ENCODE measurements at regions of chr17 and their contacts with region 1.

Region 1: GRCh38 chr17:45277216-45277849 is 15.4 kb upstream of the SPATA32 start:
- DNase-seq: peak; percentile 78 to 93 (median 91)
- ATAC-seq: peak; percentile 99
- H3K4me3 ChIP-seq: no peak overlapping the region
- H3K4me3 Mint-ChIP-seq: no peak overlapping the region
- H3K27ac ChIP-seq: no peak overlapping the region
- H3K27ac Mint-ChIP-seq: peak overlapping the region; percentile 41
- H3K4me1 ChIP-seq: no peaks in the 10 kb centered on the region
- H3K4me1 Mint-ChIP-seq: peaks cover 7% of the 10 kb centered on the region
- H3K27me3 ChIP-seq: no peaks in the 10 kb centered on the region
- H3K27me3 Mint-ChIP-seq: no peaks in the 10 kb centered on the region
- CTCF ChIP-seq: peak; percentile 73

Region 2: GRCh38 chr17:45218895-45219661 is 58.3 kb before region 1 on chr17:
- CTCF ChIA-PET with region 1: interaction called, 206 read pairs
- POLR2A ChIA-PET with region 1: interaction called, 11 read pairs
- intact Hi-C with region 1: no loop called
- DNase-seq: peak; percentile 79 to 95 (median 89)
- ATAC-seq: peak; percentile 45
- H3K4me3 ChIP-seq: peak overlapping the region in 1 of 2 experiments; percentile 1
- H3K4me3 Mint-ChIP-seq: peak overlapping the region; percentile 91
- H3K27ac ChIP-seq: no peak overlapping the region
- H3K27ac Mint-ChIP-seq: peak overlapping the region; percentile 90
- H3K4me1 ChIP-seq: peaks cover 25% of the 10 kb centered on the region
- H3K4me1 Mint-ChIP-seq: peaks cover 37% of the 10 kb centered on the region
- H3K27me3 ChIP-seq: no peaks in the 10 kb centered on the region
- H3K27me3 Mint-ChIP-seq: no peaks in the 10 kb centered on the region
- CTCF ChIP-seq: peak; percentile 96

Region 3: DNA sequence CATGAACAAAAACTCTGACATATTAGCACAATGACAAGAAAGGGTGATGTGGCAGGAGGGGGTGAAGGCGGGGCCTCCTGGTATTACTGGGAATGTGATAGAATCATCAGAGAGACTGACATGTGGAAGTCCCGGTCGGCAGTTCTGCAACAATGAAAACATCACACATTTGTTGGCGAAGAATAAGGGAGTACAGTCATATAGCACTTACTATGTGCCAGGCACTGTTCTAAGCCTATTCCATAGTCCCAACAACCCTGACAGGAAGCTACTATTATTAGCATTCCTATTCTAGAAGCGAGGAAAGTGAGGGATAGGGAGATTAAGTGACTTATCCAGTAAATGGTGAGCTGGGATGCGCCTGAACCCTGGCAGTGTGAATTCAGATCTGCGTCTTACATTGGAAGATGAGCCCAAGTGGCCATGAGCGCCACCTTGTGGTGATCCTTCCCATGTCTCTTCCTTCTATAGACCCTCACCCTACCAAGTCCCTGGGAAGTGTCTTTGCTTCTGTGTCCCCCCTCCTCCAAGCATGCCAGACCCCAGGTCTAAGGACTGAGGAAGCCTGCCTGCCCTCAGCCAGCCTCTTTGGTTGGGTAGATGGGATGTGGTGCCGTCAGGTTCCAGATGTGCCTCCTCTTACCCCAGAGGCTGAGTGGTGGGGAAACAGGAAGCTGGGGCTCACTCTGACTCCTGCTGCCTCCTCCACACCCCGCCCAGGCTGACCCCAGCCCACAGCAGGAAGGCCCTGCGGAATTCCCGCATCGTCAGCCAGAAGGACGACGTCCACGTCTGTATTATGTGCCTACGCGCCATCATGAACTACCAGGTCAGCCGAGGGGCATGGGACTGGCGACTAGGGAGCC is 41.7 kb before region 1 on chr17:
- CTCF ChIA-PET with region 1: interaction called, 27 read pairs
- POLR2A ChIA-PET with region 1: no interaction called
- intact Hi-C with region 1: no loop called
- DNase-seq: peak; percentile 62 to 90 (median 83)
- ATAC-seq: peak; percentile 62
- H3K4me3 ChIP-seq: no peak overlapping the region
- H3K4me3 Mint-ChIP-seq: no peak overlapping the region
- H3K27ac ChIP-seq: peak overlapping the region in 1 of 2 experiments; percentile 60
- H3K27ac Mint-ChIP-seq: peak overlapping the region; percentile 66
- H3K4me1 ChIP-seq: peaks cover 45% of the 10 kb centered on the region
- H3K4me1 Mint-ChIP-seq: peaks cover 51% of the 10 kb centered on the region
- H3K27me3 ChIP-seq: no peaks in the 10 kb centered on the region
- H3K27me3 Mint-ChIP-seq: no peaks in the 10 kb centered on the region
- CTCF ChIP-seq: peak; percentile 71

Region 4: DNA sequence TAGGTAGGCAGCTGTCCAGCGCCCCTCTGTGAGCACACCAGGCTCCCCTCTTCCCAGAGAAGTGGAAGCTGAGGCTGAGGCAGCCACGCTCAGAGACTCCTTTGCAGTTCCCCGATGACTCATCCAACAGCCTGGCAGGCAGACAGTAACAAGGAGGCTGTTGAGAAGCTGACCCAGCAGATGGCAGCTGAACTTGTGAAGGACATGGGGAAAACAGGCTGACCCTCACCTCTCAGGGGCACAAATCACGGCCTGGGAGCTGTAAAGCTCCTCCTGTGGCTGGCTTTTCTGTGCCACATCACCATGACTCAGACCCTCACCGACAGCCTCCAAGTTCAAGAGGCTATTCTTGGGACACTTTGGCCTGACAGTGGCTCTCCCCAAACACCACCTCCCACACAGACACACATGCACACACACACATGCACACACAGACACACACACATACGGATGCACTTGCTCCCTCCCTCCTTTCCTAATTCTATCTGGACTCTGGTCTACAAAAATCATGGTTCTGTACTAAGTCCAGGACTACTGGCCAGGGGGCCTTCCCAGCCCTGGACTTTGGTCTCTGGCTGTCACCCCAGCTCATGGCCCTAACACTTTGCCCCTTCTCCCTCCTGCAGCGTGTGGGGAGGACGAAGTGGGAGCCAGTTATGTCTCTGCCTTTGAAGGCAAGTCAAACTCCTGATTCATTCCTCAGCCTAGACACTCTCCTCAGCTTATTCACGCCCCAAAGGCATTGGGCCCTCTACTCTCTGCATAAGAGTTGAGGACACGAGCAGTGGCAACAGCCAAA is 16.3 kb after region 1 on chr17:
- CTCF ChIA-PET with region 1: interaction called, 28 read pairs
- POLR2A ChIA-PET with region 1: no interaction called
- intact Hi-C with region 1: no loop called
- DNase-seq: peak in 1 of 9 experiments; percentile 34
- ATAC-seq: no peak
- H3K4me3 ChIP-seq: no peak overlapping the region
- H3K4me3 Mint-ChIP-seq: no peak overlapping the region
- H3K27ac ChIP-seq: no peak overlapping the region
- H3K27ac Mint-ChIP-seq: peak overlapping the region; percentile 58
- H3K4me1 ChIP-seq: peaks cover 26% of the 10 kb centered on the region
- H3K4me1 Mint-ChIP-seq: peaks cover 71% of the 10 kb centered on the region
- H3K27me3 ChIP-seq: no peaks in the 10 kb centered on the region
- H3K27me3 Mint-ChIP-seq: no peaks in the 10 kb centered on the region
- CTCF ChIP-seq: no peak

Region 5: GRCh38 chr17:45317112-45317928 is 40.0 kb after region 1 on chr17:
- CTCF ChIA-PET with region 1: interaction called, 104 read pairs
- POLR2A ChIA-PET with region 1: interaction called, 11 read pairs
- intact Hi-C with region 1: loop called (anchors 1 to 2 kb)
- DNase-seq: peak; percentile 99 to 100 (median 100)
- ATAC-seq: peak; percentile 81
- H3K4me3 ChIP-seq: peak overlapping the region; percentile 55 to 81
- H3K4me3 Mint-ChIP-seq: peak overlapping the region; percentile 95
- H3K27ac ChIP-seq: peak overlapping the region; percentile 75 to 81
- H3K27ac Mint-ChIP-seq: peak overlapping the region; percentile 94
- H3K4me1 ChIP-seq: peaks cover 78% of the 10 kb centered on the region
- H3K4me1 Mint-ChIP-seq: peaks cover 80% of the 10 kb centered on the region
- H3K27me3 ChIP-seq: no peaks in the 10 kb centered on the region
- H3K27me3 Mint-ChIP-seq: no peaks in the 10 kb centered on the region
- CTCF ChIP-seq: no peak

Region 6: DNA sequence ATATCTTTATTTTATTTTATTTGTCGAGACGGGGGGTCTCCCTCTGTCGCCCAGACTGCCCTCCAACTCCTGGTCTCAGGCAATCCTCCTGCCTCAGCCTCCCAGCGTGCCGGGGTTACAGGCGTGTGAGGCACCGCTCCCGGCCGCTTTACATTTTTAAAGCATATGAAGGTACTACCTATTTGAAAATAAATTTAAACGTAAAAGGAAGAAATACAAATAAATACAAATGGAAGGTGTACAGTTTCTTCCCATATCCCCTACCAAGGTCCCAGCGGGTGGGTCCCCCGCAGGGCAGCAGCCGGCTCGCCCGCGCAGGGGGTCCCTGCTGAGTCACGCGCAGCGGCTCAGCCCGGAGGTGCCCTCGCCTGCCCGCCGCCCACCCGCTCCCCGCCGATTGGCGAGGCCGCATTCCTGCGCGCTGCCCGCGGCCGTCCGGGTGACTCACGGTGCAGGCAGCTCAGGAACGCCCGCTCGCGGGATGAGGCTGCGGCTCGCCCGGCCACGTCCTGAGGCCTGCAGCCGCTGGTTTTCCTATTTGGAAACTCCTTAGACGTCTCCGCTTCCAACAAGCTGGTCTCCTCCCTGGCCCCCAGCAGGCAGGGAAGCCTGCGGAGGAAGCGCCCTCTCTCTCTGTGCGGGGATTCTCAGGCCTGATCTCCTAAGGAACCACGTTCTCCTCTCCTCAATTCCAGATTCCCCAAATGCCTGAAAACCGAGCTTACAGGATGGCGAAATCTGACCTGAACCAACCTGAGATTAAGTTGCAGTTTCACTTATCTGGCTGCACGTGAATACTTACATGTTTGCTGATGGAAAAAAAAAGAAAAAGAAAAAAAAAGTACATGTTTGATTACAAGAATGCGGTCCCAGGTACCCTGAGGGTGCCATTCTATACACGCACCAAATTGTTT is 94.3 kb after region 1 on chr17:
- CTCF ChIA-PET with region 1: interaction called, 11 read pairs
- POLR2A ChIA-PET with region 1: interaction called, 3 read pairs
- intact Hi-C with region 1: no loop called
- DNase-seq: peak in 2 of 9 experiments; percentile 18 to 30
- ATAC-seq: peak; percentile 34
- H3K4me3 ChIP-seq: no peak overlapping the region
- H3K4me3 Mint-ChIP-seq: peak overlapping the region; percentile 66
- H3K27ac ChIP-seq: no peak overlapping the region
- H3K27ac Mint-ChIP-seq: no peak overlapping the region
- H3K4me1 ChIP-seq: peaks cover 8% of the 10 kb centered on the region
- H3K4me1 Mint-ChIP-seq: peaks cover 3% of the 10 kb centered on the region
- H3K27me3 ChIP-seq: peaks cover 0 to 2% of the 10 kb centered on the region in 2 experiments
- H3K27me3 Mint-ChIP-seq: peaks cover 14% of the 10 kb centered on the region
- CTCF ChIP-seq: no peak

Measured in CD8-positive, alpha-beta T cell (primary cell).